Panc1 (cell line): ENCODE measurements at regions of chr12 and their contacts with region 1.

Region 1: GRCh38 chr12:119725523-119725922 is 57.6 kb downstream of the PRKAB1 start:
- DNase-seq: no peak
- ATAC-seq: no peak
- H3K4me3 ChIP-seq: no peak overlapping the region
- H3K27ac ChIP-seq: no peak overlapping the region
- H3K4me1 ChIP-seq: no peaks in the 10 kb centered on the region
- H3K27me3 ChIP-seq: no peaks in the 10 kb centered on the region
- CTCF ChIP-seq: no peak

Region 2: GRCh38 chr12:119803381-119803791 is 77.9 kb after region 1 on chr12:
- CTCF ChIA-PET with region 1: no interaction called
- POLR2A ChIA-PET with region 1: interaction called, 11 read pairs
- in situ Hi-C with region 1: no loop called
- intact Hi-C with region 1: no loop called
- DNase-seq: no peak
- ATAC-seq: no peak
- H3K4me3 ChIP-seq: no peak overlapping the region
- H3K27ac ChIP-seq: no peak overlapping the region
- H3K4me1 ChIP-seq: no peaks in the 10 kb centered on the region
- H3K27me3 ChIP-seq: no peaks in the 10 kb centered on the region
- CTCF ChIP-seq: no peak